Naive thymus-derived CD4-positive, alpha-beta T cell (primary cell): ENCODE measurements at regions of chr19 and their contacts with region 1.

Region 1: GRCh38 chr19:38929929-38930775 is at the start of gene SARS2:
- DNase-seq: peak; percentile 92 to 98 (median 96)
- ATAC-seq: peak; percentile 85
- H3K4me3 ChIP-seq: peak within 1 kb of the TSS; percentile 94
- H3K4me3 Mint-ChIP-seq: peak within 1 kb of the TSS; percentile 94 to 100 (median 98)
- H3K27ac ChIP-seq: peak within 1 kb of the TSS; percentile 91
- H3K27ac Mint-ChIP-seq: peak within 1 kb of the TSS; percentile 94 to 100 (median 99)
- H3K4me1 ChIP-seq: peaks cover 21 to 55% of the 10 kb centered on the region in 2 donors
- H3K4me1 Mint-ChIP-seq: peaks cover 22 to 47% (median 39%) of the 10 kb centered on the region in 7 donors
- H3K27me3 ChIP-seq: no peaks in the 10 kb centered on the region
- H3K27me3 Mint-ChIP-seq: peaks cover 0 to 2% (median 0%) of the 10 kb centered on the region in 5 donors
- total RNA-seq, gene SARS2: 17.5 to 35.6 (median 25.4) TPM

Region 2: DNA sequence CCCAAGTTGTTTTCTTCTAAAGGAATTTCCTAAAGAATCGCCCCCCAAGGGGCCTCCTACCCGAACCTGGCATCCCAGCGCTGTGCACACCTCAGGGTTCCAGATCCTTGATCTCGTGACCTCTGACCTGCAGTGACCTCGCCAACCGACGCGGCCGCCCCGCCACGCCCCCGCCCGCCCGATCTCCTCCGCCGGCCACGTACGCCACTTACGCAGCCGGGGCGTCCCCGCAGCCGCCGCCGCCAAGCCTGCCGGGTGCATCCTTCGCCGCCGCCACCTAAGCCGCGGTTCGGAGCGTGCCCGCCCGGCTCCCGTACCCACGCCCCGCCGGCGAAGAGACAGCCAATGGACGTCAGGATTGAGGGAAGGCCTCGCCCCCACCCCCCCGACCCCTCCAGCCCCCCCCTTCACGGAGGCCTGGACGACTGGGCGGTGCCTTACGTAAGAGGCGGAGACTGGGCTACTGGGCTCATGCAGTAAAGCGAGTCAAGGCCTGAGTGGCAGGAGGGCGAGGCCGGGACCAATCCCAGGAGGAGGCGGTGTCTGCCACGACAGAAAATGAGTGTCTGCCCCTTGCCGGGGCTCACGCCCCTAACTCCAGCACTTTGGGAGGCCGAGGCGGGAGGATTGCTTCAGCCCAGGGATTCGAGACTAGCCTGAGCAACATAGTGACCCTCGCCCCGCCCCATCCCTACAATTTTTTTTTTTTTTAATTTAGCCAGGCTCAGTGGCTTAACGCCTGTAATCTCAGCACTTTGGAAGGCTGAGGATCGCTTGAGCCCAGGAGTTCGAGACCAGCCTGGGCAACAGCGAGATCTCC is 614.3 kb before region 1 on chr19 and contains the start of gene YIF1B:
- CTCF ChIA-PET with region 1: interaction called, 5 read pairs
- POLR2A ChIA-PET with region 1: no interaction called
- intact Hi-C with region 1: loop called in 1 of 2 experiments (anchors 1 kb)
- DNase-seq: peak; percentile 93 to 97 (median 95)
- ATAC-seq: peak; percentile 95
- H3K4me3 ChIP-seq: peak within 1 kb of the TSS; percentile 90
- H3K4me3 Mint-ChIP-seq: peak within 1 kb of the TSS; percentile 87 to 96 (median 91)
- H3K27ac ChIP-seq: peak within 1 kb of the TSS; percentile 97
- H3K27ac Mint-ChIP-seq: peak within 1 kb of the TSS; percentile 90 to 97 (median 93)
- H3K4me1 ChIP-seq: peaks cover 14 to 30% of the 10 kb centered on the region in 2 donors
- H3K4me1 Mint-ChIP-seq: peaks cover 29 to 57% (median 48%) of the 10 kb centered on the region in 7 donors
- H3K27me3 ChIP-seq: no peaks in the 10 kb centered on the region
- H3K27me3 Mint-ChIP-seq: no peaks in the 10 kb centered on the region
- total RNA-seq, gene YIF1B: 26.1 to 84.7 (median 38.0) TPM

Region 3: DNA sequence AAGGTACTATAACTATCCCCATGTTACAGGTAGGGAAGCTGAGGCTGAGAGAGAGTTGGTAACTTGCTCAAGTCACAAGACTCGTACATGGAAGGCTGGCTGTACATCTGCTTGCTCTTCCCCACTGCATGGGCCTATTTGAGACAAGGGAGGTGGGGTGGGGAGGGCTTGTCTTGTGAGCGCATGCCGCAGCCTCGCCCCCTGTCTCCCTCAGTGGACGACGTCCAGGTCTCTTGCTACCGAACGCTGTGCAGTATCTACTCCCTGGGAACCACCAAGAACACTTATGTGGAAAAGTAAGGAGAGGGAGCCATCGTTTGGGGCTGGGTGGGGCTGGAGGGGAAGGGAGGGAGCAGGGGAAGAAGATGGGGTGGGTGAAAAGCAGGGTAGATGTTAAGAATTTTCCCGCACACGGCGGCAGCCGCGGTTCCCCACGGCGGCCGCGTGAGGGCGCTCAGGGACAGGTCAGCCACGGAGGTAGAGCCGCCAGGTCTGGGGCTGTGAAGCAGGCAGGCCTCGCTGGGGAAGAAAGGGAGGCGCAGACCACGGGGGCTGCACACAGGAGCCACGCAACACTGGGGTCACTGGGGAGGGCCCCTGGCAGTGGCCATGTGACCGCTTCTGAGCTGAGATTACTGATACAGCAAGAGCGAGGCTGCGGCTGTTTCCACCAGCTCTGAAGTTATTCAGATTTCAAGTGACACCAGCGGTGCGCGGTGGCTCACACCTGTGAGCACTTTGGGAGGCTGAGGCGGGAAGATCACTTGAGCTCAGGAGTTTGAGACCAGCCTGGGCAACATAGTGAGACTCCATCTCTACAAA is 415.1 kb before region 1 on chr19:
- CTCF ChIA-PET with region 1: interaction called, 5 read pairs
- POLR2A ChIA-PET with region 1: no interaction called
- intact Hi-C with region 1: loop called in 1 of 2 experiments (anchors 10 kb)
- DNase-seq: peak; percentile 47 to 84 (median 74)
- ATAC-seq: peak; percentile 95
- H3K4me3 ChIP-seq: no peak overlapping the region
- H3K4me3 Mint-ChIP-seq: peak overlapping the region in 2 of 10 donors; percentile 16 to 45
- H3K27ac ChIP-seq: no peak overlapping the region
- H3K27ac Mint-ChIP-seq: peak overlapping the region in 3 of 9 donors; percentile 14 to 64 (median 60)
- H3K4me1 ChIP-seq: peaks cover 0 to 10% of the 10 kb centered on the region in 2 donors
- H3K4me1 Mint-ChIP-seq: peaks cover 6 to 30% (median 9%) of the 10 kb centered on the region in 7 donors
- H3K27me3 ChIP-seq: no peaks in the 10 kb centered on the region
- H3K27me3 Mint-ChIP-seq: peaks cover 0 to 4% (median 4%) of the 10 kb centered on the region in 5 donors

Region 4: GRCh38 chr19:38647368-38647965 is 282.7 kb before region 1 on chr19 and contains the start of gene ACTN4:
- CTCF ChIA-PET with region 1: interaction called, 4 read pairs
- POLR2A ChIA-PET with region 1: interaction called, 3 read pairs
- intact Hi-C with region 1: loop called (anchors 1 kb)
- DNase-seq: peak; percentile 98 to 100 (median 100)
- ATAC-seq: peak; percentile 98
- H3K4me3 ChIP-seq: peak within 1 kb of the TSS; percentile 85
- H3K4me3 Mint-ChIP-seq: peak within 1 kb of the TSS; percentile 74 to 99 (median 89)
- H3K27ac ChIP-seq: peak within 1 kb of the TSS; percentile 69
- H3K27ac Mint-ChIP-seq: peak within 1 kb of the TSS; percentile 74 to 87 (median 84)
- H3K4me1 ChIP-seq: peaks cover 20 to 27% of the 10 kb centered on the region in 2 donors
- H3K4me1 Mint-ChIP-seq: peaks cover 20 to 52% (median 33%) of the 10 kb centered on the region in 7 donors
- H3K27me3 ChIP-seq: peaks cover 0 to 17% of the 10 kb centered on the region in 2 donors
- H3K27me3 Mint-ChIP-seq: peaks cover 0 to 33% (median 19%) of the 10 kb centered on the region in 5 donors
- total RNA-seq, gene ACTN4: 49.2 to 355 (median 54.4) TPM

Region 5: GRCh38 chr19:38831142-38831605 is 99.0 kb before region 1 on chr19:
- CTCF ChIA-PET with region 1: interaction called, 3 read pairs
- POLR2A ChIA-PET with region 1: interaction called, 8 read pairs
- intact Hi-C with region 1: loop called (anchors 1 kb)
- DNase-seq: peak in 1 of 9 donors; percentile 48
- ATAC-seq: peak; percentile 20
- H3K4me3 ChIP-seq: peak overlapping the region; percentile 80
- H3K4me3 Mint-ChIP-seq: peak overlapping the region; percentile 90 to 97 (median 94)
- H3K27ac ChIP-seq: peak overlapping the region; percentile 84
- H3K27ac Mint-ChIP-seq: peak overlapping the region; percentile 78 to 97 (median 92)
- H3K4me1 ChIP-seq: peaks cover 12 to 21% of the 10 kb centered on the region in 2 donors
- H3K4me1 Mint-ChIP-seq: peaks cover 14 to 54% (median 38%) of the 10 kb centered on the region in 7 donors
- H3K27me3 ChIP-seq: no peaks in the 10 kb centered on the region
- H3K27me3 Mint-ChIP-seq: no peaks in the 10 kb centered on the region

Region 6: DNA sequence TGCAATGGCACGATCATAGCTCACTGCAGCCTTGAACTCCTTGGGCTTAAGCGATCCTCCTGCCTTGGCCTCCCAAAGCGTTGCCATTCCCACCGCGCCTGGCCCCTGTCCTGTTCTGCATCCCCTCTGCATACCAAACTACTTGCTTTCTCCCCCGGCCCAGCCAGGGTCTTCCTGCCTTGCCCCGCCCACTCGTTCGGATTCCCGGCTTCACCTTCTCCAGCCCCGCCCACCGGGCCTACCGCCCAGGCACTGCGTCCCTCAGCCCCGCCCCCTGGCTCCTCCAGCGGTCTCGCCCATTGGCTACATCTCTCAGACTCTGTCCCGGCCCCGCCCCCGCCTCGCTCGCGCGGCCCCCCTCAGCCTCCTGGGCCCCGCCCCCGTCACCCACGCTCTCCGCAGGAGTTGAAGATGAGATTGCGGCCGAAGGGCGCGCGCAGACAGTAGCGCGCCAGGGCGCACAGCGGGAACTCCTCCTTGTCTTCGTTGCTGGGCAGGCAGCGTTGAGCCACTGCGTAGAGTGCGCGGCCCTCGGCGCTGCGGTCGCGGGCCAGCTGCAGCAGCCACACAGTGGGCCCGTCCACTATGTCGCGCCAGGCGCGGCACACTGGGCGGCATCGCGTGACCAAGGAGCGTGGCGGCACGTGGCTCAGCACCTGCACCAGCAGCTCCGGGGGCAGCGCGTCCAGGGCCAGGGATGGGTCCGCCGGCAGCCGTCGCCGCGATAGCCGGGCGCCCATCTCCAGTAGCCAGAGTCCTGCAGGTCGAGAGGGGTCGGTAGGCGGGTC is 19.6 kb after region 1 on chr19:
- CTCF ChIA-PET with region 1: interaction called, 4 read pairs
- POLR2A ChIA-PET with region 1: no interaction called
- intact Hi-C with region 1: loop called in 1 of 2 experiments (anchors 1 kb)
- DNase-seq: peak; percentile 49 to 88 (median 70)
- ATAC-seq: peak; percentile 98
- H3K4me3 ChIP-seq: peak overlapping the region; percentile 39
- H3K4me3 Mint-ChIP-seq: peak overlapping the region; percentile 52 to 82 (median 72)
- H3K27ac ChIP-seq: no peak overlapping the region
- H3K27ac Mint-ChIP-seq: peak overlapping the region in 3 of 9 donors; percentile 20 to 64 (median 61)
- H3K4me1 ChIP-seq: peaks cover 0 to 4% of the 10 kb centered on the region in 2 donors
- H3K4me1 Mint-ChIP-seq: peaks cover 10 to 18% (median 16%) of the 10 kb centered on the region in 7 donors
- H3K27me3 ChIP-seq: no peaks in the 10 kb centered on the region
- H3K27me3 Mint-ChIP-seq: peaks cover 14 to 29% (median 15%) of the 10 kb centered on the region in 5 donors

Region 7: GRCh38 chr19:39282021-39282420 is 351.9 kb after region 1 on chr19:
- CTCF ChIA-PET with region 1: no interaction called
- POLR2A ChIA-PET with region 1: no interaction called
- intact Hi-C with region 1: no loop called
- DNase-seq: no peak
- ATAC-seq: no peak
- H3K4me3 ChIP-seq: no peak overlapping the region
- H3K4me3 Mint-ChIP-seq: no peak overlapping the region
- H3K27ac ChIP-seq: no peak overlapping the region
- H3K27ac Mint-ChIP-seq: no peak overlapping the region
- H3K4me1 ChIP-seq: no peaks in the 10 kb centered on the region
- H3K4me1 Mint-ChIP-seq: peaks cover 0 to 2% (median 0%) of the 10 kb centered on the region in 7 donors
- H3K27me3 ChIP-seq: no peaks in the 10 kb centered on the region
- H3K27me3 Mint-ChIP-seq: peaks cover 0 to 25% (median 0%) of the 10 kb centered on the region in 5 donors